Activated naive CD4-positive, alpha-beta T cell treated with anti-CD3 and anti-CD28 coated beads for 36 hours (primary cell): ENCODE measurements at regions of chr1 and their contacts with region 1.

Region 1: GRCh38 chr1:206761159-206761768 is 9.3 kb upstream of the IL19 start:
- DNase-seq: no peak
- H3K4me3 Mint-ChIP-seq: no peak overlapping the region
- H3K27ac Mint-ChIP-seq: no peak overlapping the region
- H3K4me1 Mint-ChIP-seq: peaks cover 22% of the 10 kb centered on the region
- H3K27me3 Mint-ChIP-seq: no peaks in the 10 kb centered on the region

Region 2: GRCh38 chr1:206612129-206612876 is 149.0 kb before region 1 on chr1 and contains the start of gene EIF2D:
- CTCF ChIA-PET with region 1: no interaction called
- intact Hi-C with region 1: no loop called
- DNase-seq: peak; percentile 95
- H3K4me3 Mint-ChIP-seq: peak within 1 kb of the TSS; percentile 92
- H3K27ac Mint-ChIP-seq: peak within 1 kb of the TSS; percentile 99
- H3K4me1 Mint-ChIP-seq: peaks cover 44% of the 10 kb centered on the region
- H3K27me3 Mint-ChIP-seq: no peaks in the 10 kb centered on the region
- total RNA-seq, gene EIF2D: 116 to 122 TPM

Region 3: GRCh38 chr1:206725109-206725963 is 35.9 kb before region 1 on chr1:
- CTCF ChIA-PET with region 1: interaction called, 17 read pairs
- intact Hi-C with region 1: no loop called
- DNase-seq: peak; percentile 84
- H3K4me3 Mint-ChIP-seq: no peak overlapping the region
- H3K27ac Mint-ChIP-seq: no peak overlapping the region
- H3K4me1 Mint-ChIP-seq: peaks cover 39% of the 10 kb centered on the region
- H3K27me3 Mint-ChIP-seq: no peaks in the 10 kb centered on the region

Region 4: GRCh38 chr1:206784471-206784903 is 23.2 kb after region 1 on chr1:
- CTCF ChIA-PET with region 1: interaction called, 5 read pairs
- intact Hi-C with region 1: loop called (anchors 1 kb)
- DNase-seq: peak; percentile 98
- H3K4me3 Mint-ChIP-seq: no peak overlapping the region
- H3K27ac Mint-ChIP-seq: peak overlapping the region; percentile 62
- H3K4me1 Mint-ChIP-seq: peaks cover 50% of the 10 kb centered on the region
- H3K27me3 Mint-ChIP-seq: peaks cover 7% of the 10 kb centered on the region